Activated B cell treated with CpG ODN at 0.5 μM for 24 hours (primary cell): ENCODE measurements at regions of chr4 and their contacts with region 1.

Region 1: GRCh38 chr4:173168396-173169177 is at the start of gene GALNT7:
- DNase-seq: peak; percentile 46
- ATAC-seq: peak; percentile 45
- H3K4me3 Mint-ChIP-seq: peak within 1 kb of the TSS; percentile 96
- H3K27ac Mint-ChIP-seq: peak within 1 kb of the TSS; percentile 85
- H3K4me1 Mint-ChIP-seq: peaks cover 39% of the 10 kb centered on the region
- H3K27me3 Mint-ChIP-seq: no peaks in the 10 kb centered on the region
- CTCF ChIP-seq: no peak
- total RNA-seq, gene GALNT7: 15.3 and 16.9 TPM in 2 replicates

Region 2: DNA sequence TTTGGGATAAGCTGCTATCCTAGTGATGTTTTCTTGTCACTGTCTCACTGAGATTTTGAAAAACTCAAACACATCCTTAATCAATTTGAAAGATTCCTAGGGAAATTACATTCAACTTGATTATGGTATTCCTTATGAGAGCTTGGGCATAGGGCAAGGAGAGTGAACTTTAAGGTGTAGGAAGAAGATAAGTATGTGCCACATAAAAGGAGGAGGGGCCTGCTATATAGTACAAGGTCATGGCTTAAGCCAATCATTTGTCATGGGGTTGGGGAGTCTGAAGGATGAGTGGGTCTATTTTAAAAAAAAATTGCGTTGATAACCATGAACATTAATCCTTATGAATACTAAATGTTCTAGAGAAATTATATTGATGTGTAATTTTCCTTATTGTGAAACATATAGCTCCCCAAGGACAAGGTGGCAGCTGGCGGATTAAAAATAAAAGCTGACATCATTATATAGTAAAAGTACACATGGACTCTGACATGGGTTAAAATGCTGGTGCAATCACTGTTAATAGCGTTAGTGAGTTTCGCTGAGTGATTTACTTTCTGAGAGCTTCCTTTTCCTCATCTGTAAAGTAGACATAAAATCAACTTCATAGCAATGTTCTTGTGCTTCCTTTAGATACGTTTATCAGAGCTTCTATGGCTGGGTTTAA is 17.4 kb after region 1 on chr4:
- CTCF ChIA-PET with region 1: interaction called, 3 read pairs
- POLR2A ChIA-PET with region 1: interaction called, 4 read pairs
- intact Hi-C with region 1: loop called (anchors 2 kb)
- DNase-seq: no peak
- ATAC-seq: no peak
- H3K4me3 Mint-ChIP-seq: no peak overlapping the region
- H3K27ac Mint-ChIP-seq: no peak overlapping the region
- H3K4me1 Mint-ChIP-seq: peaks cover 28% of the 10 kb centered on the region
- H3K27me3 Mint-ChIP-seq: no peaks in the 10 kb centered on the region
- CTCF ChIP-seq: no peak

Region 3: GRCh38 chr4:173257732-173258717 is 89.4 kb after region 1 on chr4:
- CTCF ChIA-PET with region 1: interaction called, 7 read pairs
- POLR2A ChIA-PET with region 1: no interaction called
- intact Hi-C with region 1: loop called (anchors 2 kb)
- DNase-seq: no peak
- ATAC-seq: peak; percentile 92
- H3K4me3 Mint-ChIP-seq: no peak overlapping the region
- H3K27ac Mint-ChIP-seq: no peak overlapping the region
- H3K4me1 Mint-ChIP-seq: peaks cover 23% of the 10 kb centered on the region
- H3K27me3 Mint-ChIP-seq: no peaks in the 10 kb centered on the region
- CTCF ChIP-seq: no peak

Region 4: GRCh38 chr4:173505924-173506518 is 337.4 kb after region 1 on chr4:
- CTCF ChIA-PET with region 1: no interaction called
- POLR2A ChIA-PET with region 1: no interaction called
- intact Hi-C with region 1: loop called (anchors 10 kb)
- DNase-seq: no peak
- ATAC-seq: peak; percentile 53
- H3K4me3 Mint-ChIP-seq: peak overlapping the region; percentile 70
- H3K27ac Mint-ChIP-seq: no peak overlapping the region
- H3K4me1 Mint-ChIP-seq: peaks cover 48% of the 10 kb centered on the region
- H3K27me3 Mint-ChIP-seq: peaks cover 76% of the 10 kb centered on the region
- CTCF ChIP-seq: no peak

Region 5: DNA sequence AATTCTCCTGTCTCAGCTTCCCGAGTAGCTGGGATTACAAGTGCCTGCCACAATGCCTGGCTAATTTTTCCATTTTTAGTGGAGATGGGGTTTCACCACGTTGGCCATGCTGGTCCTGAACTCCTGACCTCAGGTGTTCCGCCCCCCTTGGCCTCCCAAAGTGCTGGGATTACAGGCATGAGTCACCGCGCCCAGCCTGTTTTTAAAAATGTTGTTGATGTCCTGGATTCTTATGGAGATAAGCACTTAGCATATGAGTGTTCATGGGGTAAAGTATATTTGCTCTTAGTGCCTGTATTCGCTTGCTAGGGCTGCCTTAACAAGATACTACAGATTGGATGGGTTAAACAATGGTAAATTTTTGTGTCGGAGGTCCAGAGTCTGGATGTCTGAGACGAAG is 1206.8 kb after region 1 on chr4:
- CTCF ChIA-PET with region 1: no interaction called
- POLR2A ChIA-PET with region 1: no interaction called
- intact Hi-C with region 1: no loop called
- DNase-seq: no peak
- ATAC-seq: no peak
- H3K4me3 Mint-ChIP-seq: no peak overlapping the region
- H3K27ac Mint-ChIP-seq: no peak overlapping the region
- H3K4me1 Mint-ChIP-seq: no peaks in the 10 kb centered on the region
- H3K27me3 Mint-ChIP-seq: no peaks in the 10 kb centered on the region
- CTCF ChIP-seq: no peak